Endothelial cell of umbilical vein (primary cell): ENCODE measurements at regions of chrX and their contacts with region 1.

Region 1: DNA sequence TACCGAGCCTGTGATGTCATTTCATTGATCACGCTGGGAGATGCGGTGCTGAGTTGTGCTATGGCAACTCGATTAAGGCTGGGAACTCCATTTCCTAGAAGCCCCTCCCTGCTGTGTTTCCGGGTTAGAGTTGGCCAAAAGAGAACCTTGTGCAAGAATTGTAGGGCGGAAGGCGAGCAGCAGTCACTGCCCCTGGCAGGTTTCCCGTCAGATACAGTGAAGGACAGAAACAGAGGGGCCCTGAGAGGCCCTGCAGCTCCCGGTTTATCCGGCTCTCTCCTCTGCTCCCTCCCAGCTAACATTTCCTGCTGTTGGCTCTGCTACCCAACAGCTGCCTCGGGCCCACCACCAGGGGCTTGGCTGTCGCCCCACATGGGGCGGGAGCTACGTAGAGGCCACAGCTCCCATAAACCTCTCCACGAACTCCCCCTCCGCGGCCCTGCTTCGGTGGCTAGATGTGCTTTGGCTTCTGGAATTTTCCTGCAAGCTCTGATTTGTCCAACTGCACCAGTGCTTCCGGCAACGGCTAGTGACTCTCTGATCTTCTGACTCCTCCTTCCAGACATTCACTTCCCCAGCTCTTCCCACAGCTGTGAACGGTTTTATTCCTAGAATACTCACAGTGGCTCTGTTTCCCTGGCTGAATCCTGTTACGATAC is 74.9 kb upstream of the USP9X start:
- DNase-seq: peak; percentile 91
- H3K4me3 ChIP-seq: no peak overlapping the region
- H3K27ac ChIP-seq: peak overlapping the region; percentile 81
- H3K4me1 ChIP-seq: peaks cover 20% of the 10 kb centered on the region
- H3K27me3 ChIP-seq: no peaks in the 10 kb centered on the region
- CTCF ChIP-seq: peak in 1 of 2 donors; percentile 44
- POLR2A ChIP-seq: peak; percentile 40

Region 2: GRCh38 chrX:41116948-41117347 is 106.6 kb after region 1 on chrX:
- CTCF ChIA-PET with region 1: interaction called, 9 read pairs
- POLR2A ChIA-PET with region 1: no interaction called
- dilution Hi-C with region 1: no loop called
- intact Hi-C with region 1: loop called (anchors 10 kb)
- DNase-seq: no peak
- H3K4me3 ChIP-seq: no peak overlapping the region
- H3K27ac ChIP-seq: no peak overlapping the region
- H3K4me1 ChIP-seq: peaks cover 4% of the 10 kb centered on the region
- H3K27me3 ChIP-seq: no peaks in the 10 kb centered on the region
- CTCF ChIP-seq: no peak
- POLR2A ChIP-seq: no peak